Left ventricle myocardium inferior (tissue), 1 donor: ENCODE measurements at regions of chr3 and their contacts with region 1.

Region 1: DNA sequence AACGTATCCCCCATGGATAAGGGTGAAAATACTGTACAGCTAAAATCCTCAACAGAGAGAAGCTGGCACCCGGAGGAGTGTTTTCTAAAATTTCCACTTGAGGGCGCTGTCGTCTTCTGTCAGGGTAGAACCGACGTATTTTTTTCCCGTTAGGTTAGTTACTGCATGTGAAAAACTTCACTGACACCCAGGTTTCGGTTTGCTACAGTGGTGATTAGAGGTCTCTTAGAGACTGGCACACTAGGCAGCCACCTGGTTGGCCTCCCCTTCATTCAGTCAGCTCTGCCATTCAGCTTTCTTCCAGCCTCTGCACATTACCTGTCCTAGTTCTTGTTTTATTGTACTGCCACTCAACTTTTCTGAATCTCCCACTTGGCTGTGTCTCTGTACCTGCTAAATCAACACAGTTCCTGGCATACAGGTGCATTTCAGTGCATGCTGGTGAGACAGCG is 18.4 kb downstream of the CCK start:
- DNase-seq: peak; percentile 19
- H3K4me3 ChIP-seq: no peak overlapping the region
- H3K27ac ChIP-seq: no peak overlapping the region
- H3K4me1 ChIP-seq: no peaks in the 10 kb centered on the region
- H3K27me3 ChIP-seq: peaks cover 29% of the 10 kb centered on the region
- CTCF ChIP-seq: peak; percentile 78

Region 2: GRCh38 chr3:42430781-42431532 is 183.4 kb after region 1 on chr3:
- intact Hi-C with region 1: no loop called
- DNase-seq: no peak
- H3K4me3 ChIP-seq: no peak overlapping the region
- H3K27ac ChIP-seq: no peak overlapping the region
- H3K4me1 ChIP-seq: peaks cover 7% of the 10 kb centered on the region
- H3K27me3 ChIP-seq: peaks cover 3% of the 10 kb centered on the region
- CTCF ChIP-seq: no peak

Region 3: GRCh38 chr3:42443819-42444436 is 196.3 kb after region 1 on chr3:
- intact Hi-C with region 1: loop called (anchors 5 kb)
- DNase-seq: peak; percentile 79
- H3K4me3 ChIP-seq: no peak overlapping the region
- H3K27ac ChIP-seq: no peak overlapping the region
- H3K4me1 ChIP-seq: no peaks in the 10 kb centered on the region
- H3K27me3 ChIP-seq: peaks cover 42% of the 10 kb centered on the region
- CTCF ChIP-seq: peak; percentile 99